ENCODE measurements at regions of chr10 and their contacts with region 1.

Region 1: DNA sequence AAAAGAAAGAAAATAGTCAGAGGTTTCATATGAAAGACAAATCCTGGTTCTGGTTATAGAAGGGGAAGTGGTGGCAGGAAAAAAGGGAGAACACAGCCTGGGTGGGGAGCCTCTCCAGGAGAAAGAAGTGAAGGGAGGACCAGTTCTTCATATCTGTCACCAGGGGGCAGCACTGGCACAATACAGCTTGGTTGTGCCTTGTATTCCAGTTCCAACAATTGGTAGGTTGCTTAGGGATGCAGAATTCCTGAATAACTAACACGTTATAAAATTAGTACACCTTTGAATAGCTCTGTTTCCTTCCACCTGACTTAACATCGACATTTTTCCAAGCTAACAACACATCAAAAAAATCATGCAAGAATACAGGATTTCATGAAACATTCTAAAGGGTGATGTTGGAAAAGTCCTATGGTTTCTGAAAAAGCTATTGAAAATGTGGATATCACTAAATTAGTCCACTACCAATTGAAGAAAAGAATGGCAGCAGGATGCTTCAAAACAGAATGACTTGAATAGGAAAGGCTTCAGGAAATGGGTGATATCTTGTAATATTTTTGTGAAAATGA is 52.9 kb downstream of the CYP26A1 start:
- DNase-seq: no peak
- H3K4me3 Mint-ChIP-seq: no peak overlapping the region
- H3K27ac Mint-ChIP-seq: peak overlapping the region; percentile 36
- H3K4me1 Mint-ChIP-seq: peaks cover 32% of the 10 kb centered on the region
- H3K27me3 Mint-ChIP-seq: no peaks in the 10 kb centered on the region
- CTCF ChIP-seq: peak; percentile 32

Region 2: DNA sequence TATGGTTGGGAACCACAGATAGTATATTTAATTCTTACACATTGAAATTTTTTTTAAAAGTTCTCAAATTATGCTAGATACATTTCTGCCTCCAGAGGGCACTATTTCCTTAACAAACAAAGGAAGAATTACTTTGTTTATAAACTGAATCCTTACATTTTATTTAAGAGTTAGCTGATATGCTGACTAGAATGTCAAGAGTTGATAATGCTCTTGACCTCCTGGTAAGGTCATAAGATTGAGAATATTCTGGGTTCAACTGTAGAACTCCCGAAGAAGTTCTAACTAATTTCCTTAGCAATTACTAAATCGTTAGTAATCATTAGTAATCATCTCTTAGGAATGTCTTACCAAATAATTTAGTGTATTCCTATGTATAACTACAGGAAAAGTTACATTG is 161.3 kb before region 1 on chr10:
- CTCF ChIA-PET with region 1: no interaction called
- intact Hi-C with region 1: no loop called
- DNase-seq: no peak
- H3K4me3 Mint-ChIP-seq: no peak overlapping the region
- H3K27ac Mint-ChIP-seq: no peak overlapping the region
- H3K4me1 Mint-ChIP-seq: no peaks in the 10 kb centered on the region
- H3K27me3 Mint-ChIP-seq: no peaks in the 10 kb centered on the region
- CTCF ChIP-seq: peak; percentile 26

Region 3: DNA sequence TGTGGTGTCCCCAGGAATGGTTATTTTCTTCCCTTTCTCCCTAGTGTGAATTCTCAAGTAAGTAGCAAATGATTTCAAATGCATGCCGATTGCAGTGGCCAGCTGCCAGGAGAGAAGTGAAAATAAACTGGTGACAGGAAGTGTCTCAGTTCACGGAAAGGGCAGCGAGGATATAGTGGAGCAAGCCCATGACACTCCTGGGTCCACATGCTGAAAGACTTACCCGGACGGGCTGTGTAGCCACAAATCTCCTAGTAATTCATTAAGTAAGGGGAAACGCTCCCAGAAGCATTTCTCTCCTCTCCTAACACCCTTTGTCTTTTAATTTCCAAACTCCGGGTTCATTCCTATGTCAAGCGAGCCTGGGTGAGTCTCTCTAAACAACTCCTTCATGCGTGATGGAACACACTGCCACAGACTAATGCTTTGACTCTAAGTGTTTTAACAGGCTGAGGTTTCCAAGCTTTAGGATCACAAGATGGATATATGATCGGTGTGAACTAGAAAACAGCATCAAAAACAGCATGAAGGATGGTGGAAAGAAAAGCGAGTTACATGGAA is 72.7 kb after region 1 on chr10:
- CTCF ChIA-PET with region 1: no interaction called
- intact Hi-C with region 1: loop called (anchors 10 kb)
- DNase-seq: peak; percentile 51
- H3K4me3 Mint-ChIP-seq: peak overlapping the region; percentile 47
- H3K27ac Mint-ChIP-seq: peak overlapping the region; percentile 83
- H3K4me1 Mint-ChIP-seq: peaks cover 25% of the 10 kb centered on the region
- H3K27me3 Mint-ChIP-seq: no peaks in the 10 kb centered on the region
- CTCF ChIP-seq: no peak